ENCODE measurements at regions of chr3 and their contacts with region 1.

Region 1: GRCh38 chr3:49916686-49917085 is 12.9 kb downstream of the MON1A start:
- DNase-seq: no peak
- H3K4me3 ChIP-seq: no peak overlapping the region
- CTCF ChIP-seq: no peak

Region 2: GRCh38 chr3:49906004-49906743 is 10.5 kb before region 1 on chr3:
- CTCF ChIA-PET with region 1: interaction called, 22 read pairs
- POLR2A ChIA-PET with region 1: no interaction called
- DNase-seq: no peak
- H3K4me3 ChIP-seq: peak overlapping the region; percentile 21
- CTCF ChIP-seq: peak; percentile 80

Region 3: GRCh38 chr3:49929331-49930240 is 12.9 kb after region 1 on chr3 and contains the start of gene MON1A:
- CTCF ChIA-PET with region 1: interaction called, 22 read pairs
- POLR2A ChIA-PET with region 1: interaction called, 3 read pairs
- DNase-seq: no peak
- H3K4me3 ChIP-seq: peak within 1 kb of the TSS; percentile 86
- CTCF ChIP-seq: peak; percentile 25